ENCODE measurements at regions of chr1 and their contacts with region 1.

Region 1: DNA sequence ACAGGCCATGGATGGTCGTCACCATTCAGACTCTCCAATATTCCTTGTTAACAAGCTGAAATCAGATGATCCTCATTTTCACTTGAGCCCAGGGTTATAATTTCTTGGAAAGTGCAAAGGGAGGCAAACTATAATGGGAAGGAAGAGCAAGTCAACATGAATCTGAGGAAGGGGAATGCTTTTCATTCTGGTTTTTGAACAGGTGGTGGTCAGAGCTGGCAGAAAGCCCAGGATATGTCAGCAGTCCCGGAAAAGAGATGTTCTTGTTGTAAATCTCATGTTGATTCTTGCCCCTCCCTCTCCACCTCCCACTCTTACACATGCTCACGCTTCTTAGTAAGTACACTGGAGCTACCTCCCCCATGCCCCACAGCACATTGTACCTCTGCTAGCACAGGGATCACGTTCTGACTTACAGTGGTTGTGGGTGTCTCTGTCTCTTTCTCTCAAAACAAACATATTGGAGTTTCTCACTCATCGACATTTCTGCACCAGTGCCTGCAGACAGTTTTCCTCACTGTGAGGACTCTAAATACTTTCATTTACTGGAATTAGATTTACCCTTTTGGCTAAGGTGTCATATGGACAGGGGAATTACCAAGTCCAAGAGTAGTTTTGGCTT is 77.6 kb downstream of the XCL2 start:
- DNase-seq: peak; percentile 81
- H3K4me3 Mint-ChIP-seq: no peak overlapping the region
- H3K27ac Mint-ChIP-seq: peak overlapping the region; percentile 75
- H3K4me1 Mint-ChIP-seq: peaks cover 58% of the 10 kb centered on the region
- H3K27me3 Mint-ChIP-seq: no peaks in the 10 kb centered on the region

Region 2: DNA sequence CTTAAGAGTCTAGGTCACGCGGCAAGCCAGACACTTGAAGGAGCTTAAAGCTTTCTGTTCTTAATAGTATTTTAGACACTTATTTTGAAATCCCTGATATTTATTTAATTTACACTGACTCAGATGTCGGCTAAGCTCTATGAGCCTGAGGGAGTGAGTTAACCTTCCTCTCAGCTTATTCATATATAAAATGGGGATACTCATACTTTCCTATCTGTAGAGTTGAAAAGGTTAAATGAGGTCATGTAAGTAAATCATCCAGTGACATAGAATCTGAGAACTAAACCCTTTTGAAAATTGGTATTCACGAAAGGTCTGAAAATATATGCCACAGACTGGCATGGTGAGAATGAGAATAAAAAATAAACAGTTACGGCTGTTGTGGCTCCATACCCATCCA is 328.1 kb before region 1 on chr1:
- CTCF ChIA-PET with region 1: no interaction called
- POLR2A ChIA-PET with region 1: no interaction called
- intact Hi-C with region 1: loop called (anchors 2 kb)
- DNase-seq: no peak
- H3K4me3 Mint-ChIP-seq: no peak overlapping the region
- H3K27ac Mint-ChIP-seq: peak overlapping the region; percentile 14
- H3K4me1 Mint-ChIP-seq: peaks cover 43% of the 10 kb centered on the region
- H3K27me3 Mint-ChIP-seq: peaks cover 27% of the 10 kb centered on the region

Region 3: DNA sequence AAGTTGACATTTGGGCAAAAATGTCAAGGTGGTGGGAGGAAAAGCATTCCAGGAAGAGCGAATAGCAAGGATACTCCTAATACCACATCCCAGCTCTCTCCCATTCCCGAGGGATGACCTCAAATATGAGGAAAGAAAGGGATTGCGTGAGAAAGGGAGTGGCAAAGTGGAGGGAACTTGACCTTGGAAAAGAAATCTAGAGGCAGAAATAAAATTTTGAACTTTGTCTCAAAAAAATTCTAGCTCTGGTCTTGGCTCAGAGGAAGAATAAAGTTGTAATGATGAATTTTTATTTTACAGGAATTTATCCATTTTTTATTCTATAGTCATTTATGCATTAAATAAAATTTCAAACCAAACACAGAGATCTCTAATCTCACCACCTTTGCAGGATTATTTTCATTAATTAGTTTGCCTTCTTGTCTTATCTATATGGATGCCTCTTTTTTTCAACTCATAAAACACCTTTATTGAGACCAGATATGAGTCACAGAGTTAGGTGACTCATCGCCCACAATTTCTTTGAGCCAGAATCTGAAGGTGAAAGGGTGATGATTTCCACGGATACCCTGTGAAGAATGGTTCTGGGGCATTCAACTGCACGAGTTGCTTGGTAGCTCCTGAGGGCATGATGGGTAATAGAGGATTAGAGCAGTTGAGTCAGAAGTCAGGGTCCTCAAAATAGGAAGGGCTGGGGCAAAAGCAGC is 57.5 kb before region 1 on chr1:
- CTCF ChIA-PET with region 1: no interaction called
- POLR2A ChIA-PET with region 1: no interaction called
- intact Hi-C with region 1: loop called (anchors 1 kb)
- DNase-seq: peak; percentile 75
- H3K4me3 Mint-ChIP-seq: peak overlapping the region; percentile 9
- H3K27ac Mint-ChIP-seq: peak overlapping the region; percentile 53
- H3K4me1 Mint-ChIP-seq: peaks cover 40% of the 10 kb centered on the region
- H3K27me3 Mint-ChIP-seq: no peaks in the 10 kb centered on the region

Region 4: DNA sequence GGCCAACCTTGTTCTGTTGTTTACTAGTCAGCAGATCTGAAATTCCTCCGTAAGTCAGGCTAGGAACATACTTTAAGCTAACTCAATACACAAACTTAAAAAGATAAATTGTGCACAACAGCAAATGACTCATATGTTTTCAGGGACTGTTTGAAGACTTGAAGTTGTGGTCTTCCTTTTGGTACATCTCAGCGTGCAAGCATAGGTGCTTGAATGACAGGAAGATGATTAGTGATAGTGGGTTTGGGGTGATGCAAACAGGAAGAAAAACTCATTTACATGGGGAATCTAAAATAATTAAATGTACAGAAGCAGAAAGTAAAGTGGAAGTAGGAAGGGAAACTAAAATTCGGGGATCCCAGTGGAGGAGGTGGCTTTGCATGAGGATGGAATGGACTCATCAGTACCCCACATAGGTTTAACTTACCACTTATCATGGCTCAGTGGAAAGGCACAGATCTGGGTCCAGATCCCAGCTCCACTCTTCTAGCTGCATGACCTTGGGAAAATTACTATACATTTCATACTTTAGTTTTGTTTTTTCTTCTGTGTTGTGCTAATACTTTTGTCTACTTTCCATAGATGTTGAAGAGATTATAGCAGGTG is 44.7 kb before region 1 on chr1:
- CTCF ChIA-PET with region 1: no interaction called
- POLR2A ChIA-PET with region 1: no interaction called
- intact Hi-C with region 1: loop called (anchors 5 kb)
- DNase-seq: peak; percentile 29
- H3K4me3 Mint-ChIP-seq: peak overlapping the region; percentile 49
- H3K27ac Mint-ChIP-seq: peak overlapping the region; percentile 78
- H3K4me1 Mint-ChIP-seq: peaks cover 33% of the 10 kb centered on the region
- H3K27me3 Mint-ChIP-seq: no peaks in the 10 kb centered on the region

Region 5: GRCh38 chr1:168485048-168485447 is 18.8 kb after region 1 on chr1:
- CTCF ChIA-PET with region 1: no interaction called
- POLR2A ChIA-PET with region 1: no interaction called
- intact Hi-C with region 1: loop called (anchors 2 kb)
- DNase-seq: peak; percentile 18
- H3K4me3 Mint-ChIP-seq: no peak overlapping the region
- H3K27ac Mint-ChIP-seq: no peak overlapping the region
- H3K4me1 Mint-ChIP-seq: peaks cover 43% of the 10 kb centered on the region
- H3K27me3 Mint-ChIP-seq: no peaks in the 10 kb centered on the region